AG04450 (cell line): ENCODE measurements at regions of chr10 and their contacts with region 1.

Region 1: GRCh38 chr10:3897156-3897555 is 112.1 kb upstream of the KLF6 start:
- DNase-seq: no peak
- H3K4me3 ChIP-seq: no peak overlapping the region
- H3K27ac ChIP-seq: no peak overlapping the region
- H3K27me3 ChIP-seq: no peaks in the 10 kb centered on the region
- CTCF ChIP-seq: no peak

Region 2: DNA sequence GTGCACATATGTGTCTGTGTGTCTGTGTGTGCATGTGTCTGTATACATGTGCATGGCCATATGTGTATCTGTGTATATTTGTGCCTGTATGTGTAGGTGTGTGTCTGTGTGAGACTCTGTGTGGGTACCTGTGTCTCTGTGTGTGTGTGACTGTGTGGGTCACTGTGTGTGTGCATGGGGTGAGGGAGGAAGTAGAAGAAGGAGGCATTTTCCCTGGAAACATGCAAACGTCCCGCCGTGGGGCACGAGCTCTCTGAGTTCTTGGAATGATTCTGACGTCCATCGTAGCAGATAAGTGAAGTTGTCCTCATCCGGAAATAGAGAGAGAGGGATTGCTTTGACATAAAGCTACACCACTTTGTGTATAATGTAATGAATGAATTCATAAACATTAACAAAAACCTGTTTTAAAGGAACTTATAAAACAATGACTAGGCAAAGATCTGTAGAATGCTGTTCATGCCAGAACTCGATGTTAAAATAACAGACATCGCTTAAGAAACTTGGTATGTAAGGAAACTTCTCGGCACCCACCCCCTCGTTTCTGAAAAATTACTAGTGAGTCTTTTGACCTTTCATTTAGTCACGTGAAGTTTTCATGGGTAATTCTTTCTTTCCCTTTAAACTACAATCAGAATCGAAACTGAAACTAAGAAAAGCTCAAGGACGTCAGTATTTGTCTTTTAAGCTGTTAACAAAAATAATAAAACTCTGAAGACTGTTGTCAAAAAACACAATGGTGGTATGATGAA is 68.6 kb before region 1 on chr10:
- CTCF ChIA-PET with region 1: no interaction called
- POLR2A ChIA-PET with region 1: interaction called, 10 read pairs
- DNase-seq: peak; percentile 61
- H3K4me3 ChIP-seq: peak overlapping the region; percentile 41
- H3K27ac ChIP-seq: peak overlapping the region; percentile 73
- H3K27me3 ChIP-seq: no peaks in the 10 kb centered on the region
- CTCF ChIP-seq: no peak

Region 3: GRCh38 chr10:3882855-3883254 is 14.3 kb before region 1 on chr10:
- CTCF ChIA-PET with region 1: no interaction called
- POLR2A ChIA-PET with region 1: no interaction called
- DNase-seq: no peak
- H3K4me3 ChIP-seq: no peak overlapping the region
- H3K27ac ChIP-seq: no peak overlapping the region
- H3K27me3 ChIP-seq: no peaks in the 10 kb centered on the region
- CTCF ChIP-seq: no peak